ENCODE measurements at regions of chr5 and their contacts with region 1.

Region 1: DNA sequence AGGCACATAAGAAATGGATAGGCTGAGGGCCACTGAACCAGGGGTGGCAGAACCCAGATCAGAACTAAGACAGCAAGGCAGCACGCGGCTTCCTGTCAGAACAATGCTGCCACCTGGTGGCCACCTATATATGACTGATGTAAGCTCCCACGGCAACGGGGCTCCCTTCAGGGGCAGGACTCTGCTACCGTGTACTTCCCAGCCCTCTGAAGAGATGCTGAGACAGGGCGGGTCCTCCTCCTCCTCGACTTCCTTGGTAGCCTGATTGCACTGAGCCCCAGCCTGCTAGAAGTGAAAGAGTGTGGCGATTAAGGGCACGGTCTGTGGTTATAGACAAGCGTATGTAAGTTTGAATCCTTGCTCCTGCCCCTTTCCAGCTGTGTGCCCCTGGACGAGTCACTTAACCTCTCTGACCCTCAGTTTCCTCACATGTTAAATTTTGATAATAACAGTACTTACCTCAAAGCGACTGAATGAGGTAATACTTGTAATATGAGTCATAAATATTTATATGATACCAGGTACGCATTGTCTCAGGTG is 13.3 kb downstream of the RPS14 start:
- DNase-seq: peak; percentile 94
- ATAC-seq: peak; percentile 93
- H3K4me3 ChIP-seq: peak overlapping the region in 1 of 5 experiments; percentile 1
- H3K4me3 Mint-ChIP-seq: peak overlapping the region; percentile 74
- H3K27ac ChIP-seq: peak overlapping the region; percentile 56 to 68
- H3K27ac Mint-ChIP-seq: peak overlapping the region; percentile 95
- H3K4me1 ChIP-seq: peaks cover 46 to 52% of the 10 kb centered on the region in 2 donors
- H3K4me1 Mint-ChIP-seq: peaks cover 42% of the 10 kb centered on the region
- H3K27me3 ChIP-seq: no peaks in the 10 kb centered on the region
- H3K27me3 Mint-ChIP-seq: no peaks in the 10 kb centered on the region
- CTCF ChIP-seq: peak; percentile 84

Region 2: DNA sequence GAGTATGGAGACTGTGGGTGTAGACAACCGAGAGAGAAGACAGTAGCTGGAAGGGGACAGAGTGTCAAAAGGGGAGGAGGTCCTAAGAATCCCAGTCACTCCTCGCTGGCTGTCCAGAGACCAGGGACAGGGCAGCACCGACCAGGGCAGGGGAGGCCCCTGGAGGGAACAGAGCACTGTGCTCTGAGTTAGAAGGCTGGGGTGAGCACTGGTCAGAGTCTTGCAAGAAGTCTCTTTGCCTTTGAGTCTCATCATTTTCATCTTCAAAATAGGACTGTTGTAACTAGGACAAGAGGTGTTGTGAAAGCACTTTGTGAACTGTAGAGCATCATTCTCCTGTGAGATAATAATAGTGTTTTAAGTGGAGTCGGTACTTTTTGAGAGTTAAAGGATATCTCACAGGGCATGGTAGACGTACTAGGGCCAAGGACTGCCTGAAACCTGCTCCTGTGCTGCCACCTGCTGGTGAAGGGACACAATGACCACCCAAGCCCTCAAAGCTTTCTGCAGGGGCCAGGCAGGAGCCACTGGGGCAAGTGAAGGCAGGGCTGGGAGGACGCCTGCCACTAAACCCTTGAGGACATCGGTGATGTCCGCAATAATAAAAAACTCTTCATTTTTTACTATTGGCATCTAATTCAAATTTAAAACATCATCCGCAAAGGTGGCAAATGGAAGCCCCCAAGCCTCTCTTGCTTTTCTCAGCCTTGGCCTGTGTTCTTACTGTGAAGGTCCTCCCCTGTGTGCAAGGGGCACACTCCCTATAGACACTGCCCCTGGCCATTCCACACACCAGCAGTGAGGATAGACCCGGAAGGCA is 218.1 kb before region 1 on chr5:
- CTCF ChIA-PET with region 1: interaction called, 3 read pairs
- POLR2A ChIA-PET with region 1: no interaction called
- intact Hi-C with region 1: loop called (anchors 1 kb)
- DNase-seq: peak; percentile 82
- ATAC-seq: peak; percentile 88
- H3K4me3 ChIP-seq: no peak overlapping the region
- H3K4me3 Mint-ChIP-seq: no peak overlapping the region
- H3K27ac ChIP-seq: no peak overlapping the region
- H3K27ac Mint-ChIP-seq: no peak overlapping the region
- H3K4me1 ChIP-seq: peaks cover 0 to 3% of the 10 kb centered on the region in 2 donors
- H3K4me1 Mint-ChIP-seq: peaks cover 2% of the 10 kb centered on the region
- H3K27me3 ChIP-seq: peaks cover 0 to 4% (median 2%) of the 10 kb centered on the region in 4 experiments
- H3K27me3 Mint-ChIP-seq: peaks cover 15% of the 10 kb centered on the region
- CTCF ChIP-seq: peak; percentile 95

Region 3: DNA sequence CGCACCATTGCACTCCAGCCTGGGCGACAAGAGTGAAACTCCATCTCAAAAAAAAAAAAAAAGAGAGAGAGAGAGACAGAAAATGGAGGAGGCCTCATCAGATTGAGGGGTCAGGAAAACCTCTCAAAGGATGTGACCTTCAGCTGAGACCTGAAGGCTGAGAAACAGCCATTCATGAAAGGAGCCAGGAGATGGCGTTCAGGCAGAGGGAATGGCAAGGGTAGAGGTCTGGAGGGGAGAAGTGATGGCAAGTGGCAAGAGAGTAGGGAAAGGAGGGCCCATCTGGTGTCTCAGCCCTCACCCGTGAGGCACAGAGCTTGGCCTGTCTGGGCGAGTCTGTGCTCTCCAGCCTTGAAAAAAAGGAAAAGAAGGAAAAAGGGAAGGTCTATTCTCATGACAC is 163.7 kb before region 1 on chr5:
- CTCF ChIA-PET with region 1: no interaction called
- POLR2A ChIA-PET with region 1: no interaction called
- intact Hi-C with region 1: loop called (anchors 2 kb)
- DNase-seq: no peak
- ATAC-seq: no peak
- H3K4me3 ChIP-seq: no peak overlapping the region
- H3K4me3 Mint-ChIP-seq: no peak overlapping the region
- H3K27ac ChIP-seq: no peak overlapping the region
- H3K27ac Mint-ChIP-seq: no peak overlapping the region
- H3K4me1 ChIP-seq: no peaks in the 10 kb centered on the region
- H3K4me1 Mint-ChIP-seq: no peaks in the 10 kb centered on the region
- H3K27me3 ChIP-seq: no peaks in the 10 kb centered on the region
- H3K27me3 Mint-ChIP-seq: peaks cover 16% of the 10 kb centered on the region
- CTCF ChIP-seq: no peak

Region 4: DNA sequence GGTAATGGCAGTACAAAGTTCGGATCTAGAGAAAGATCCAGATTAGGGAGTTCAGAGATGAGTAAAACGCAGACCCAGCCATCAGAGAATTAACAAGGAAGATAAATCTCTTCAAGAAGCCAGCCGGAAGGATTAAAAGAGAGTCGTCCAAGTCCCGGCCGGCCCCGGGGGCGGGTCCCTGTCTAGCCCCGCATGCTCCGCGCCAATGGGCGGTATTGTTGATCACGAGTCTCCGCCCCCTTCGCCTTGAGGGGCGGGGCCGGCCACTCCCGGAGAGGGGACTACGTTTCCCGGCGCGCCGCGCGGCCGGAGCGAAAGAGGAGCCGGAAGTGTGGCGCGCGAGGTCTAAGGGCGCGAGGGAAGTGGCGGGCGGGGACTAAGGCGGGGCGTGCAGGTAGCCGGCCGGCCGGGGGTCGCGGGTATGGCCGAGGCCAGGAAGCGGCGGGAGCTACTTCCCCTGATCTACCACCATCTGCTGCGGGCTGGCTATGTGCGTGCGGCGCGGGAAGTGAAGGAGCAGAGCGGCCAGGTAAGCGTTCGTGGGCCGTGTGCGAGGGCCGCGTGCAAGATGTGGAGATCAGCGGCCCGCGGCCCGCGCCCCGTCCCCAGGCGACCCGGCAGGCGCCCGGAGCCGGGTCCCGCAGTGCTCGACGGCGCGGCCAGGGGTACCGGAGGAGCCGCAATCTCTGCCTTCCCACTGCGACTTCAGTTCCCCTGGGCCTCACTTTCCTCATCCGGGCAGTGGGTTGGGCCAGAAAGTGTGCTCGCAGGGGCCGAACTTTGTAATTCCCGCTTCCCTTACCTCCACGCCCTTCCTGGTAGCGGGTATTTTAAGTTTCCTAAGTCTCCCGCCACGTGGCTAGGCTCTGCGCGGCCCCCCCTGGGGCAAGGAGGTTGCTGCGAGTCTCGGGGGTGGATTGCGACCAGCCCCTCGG is 78.6 kb before region 1 on chr5 and contains the start of gene TCOF1:
- CTCF ChIA-PET with region 1: interaction called, 3 read pairs
- POLR2A ChIA-PET with region 1: no interaction called
- intact Hi-C with region 1: loop called (anchors 1 kb)
- DNase-seq: peak; percentile 97
- ATAC-seq: peak; percentile 99
- H3K4me3 ChIP-seq: peak within 1 kb of the TSS; percentile 53 to 77 (median 69)
- H3K4me3 Mint-ChIP-seq: peak within 1 kb of the TSS; percentile 90
- H3K27ac ChIP-seq: peak within 1 kb of the TSS; percentile 23 to 68
- H3K27ac Mint-ChIP-seq: peak within 1 kb of the TSS; percentile 88
- H3K4me1 ChIP-seq: peaks cover 35 to 54% of the 10 kb centered on the region in 2 donors
- H3K4me1 Mint-ChIP-seq: peaks cover 50% of the 10 kb centered on the region
- H3K27me3 ChIP-seq: no peaks in the 10 kb centered on the region
- H3K27me3 Mint-ChIP-seq: no peaks in the 10 kb centered on the region
- CTCF ChIP-seq: no peak
- total RNA-seq, gene TCOF1: 62.4 and 66.5 TPM in 2 replicates

Region 5: GRCh38 chr5:150398722-150399523 is 37.3 kb before region 1 on chr5:
- CTCF ChIA-PET with region 1: interaction called, 396 read pairs
- POLR2A ChIA-PET with region 1: interaction called, 286 read pairs
- intact Hi-C with region 1: loop called (anchors 1 kb)
- DNase-seq: peak; percentile 94
- ATAC-seq: peak; percentile 67
- H3K4me3 ChIP-seq: no peak overlapping the region
- H3K4me3 Mint-ChIP-seq: peak overlapping the region; percentile 27
- H3K27ac ChIP-seq: peak overlapping the region; percentile 54 to 63
- H3K27ac Mint-ChIP-seq: peak overlapping the region; percentile 88
- H3K4me1 ChIP-seq: peaks cover 3 to 33% of the 10 kb centered on the region in 2 donors
- H3K4me1 Mint-ChIP-seq: peaks cover 49% of the 10 kb centered on the region
- H3K27me3 ChIP-seq: no peaks in the 10 kb centered on the region
- H3K27me3 Mint-ChIP-seq: no peaks in the 10 kb centered on the region
- CTCF ChIP-seq: peak; percentile 83

Region 6: GRCh38 chr5:150419630-150420270 is 16.5 kb before region 1 on chr5:
- CTCF ChIA-PET with region 1: interaction called, 19 read pairs
- POLR2A ChIA-PET with region 1: interaction called, 387 read pairs
- intact Hi-C with region 1: no loop called
- DNase-seq: peak; percentile 87
- ATAC-seq: peak; percentile 99
- H3K4me3 ChIP-seq: peak overlapping the region in 4 of 5 experiments; percentile 16 to 46 (median 33)
- H3K4me3 Mint-ChIP-seq: peak overlapping the region; percentile 81
- H3K27ac ChIP-seq: peak overlapping the region; percentile 86 to 88
- H3K27ac Mint-ChIP-seq: peak overlapping the region; percentile 100
- H3K4me1 ChIP-seq: peaks cover 67 to 72% of the 10 kb centered on the region in 2 donors
- H3K4me1 Mint-ChIP-seq: peaks cover 59% of the 10 kb centered on the region
- H3K27me3 ChIP-seq: no peaks in the 10 kb centered on the region
- H3K27me3 Mint-ChIP-seq: no peaks in the 10 kb centered on the region
- CTCF ChIP-seq: no peak

Region 7: DNA sequence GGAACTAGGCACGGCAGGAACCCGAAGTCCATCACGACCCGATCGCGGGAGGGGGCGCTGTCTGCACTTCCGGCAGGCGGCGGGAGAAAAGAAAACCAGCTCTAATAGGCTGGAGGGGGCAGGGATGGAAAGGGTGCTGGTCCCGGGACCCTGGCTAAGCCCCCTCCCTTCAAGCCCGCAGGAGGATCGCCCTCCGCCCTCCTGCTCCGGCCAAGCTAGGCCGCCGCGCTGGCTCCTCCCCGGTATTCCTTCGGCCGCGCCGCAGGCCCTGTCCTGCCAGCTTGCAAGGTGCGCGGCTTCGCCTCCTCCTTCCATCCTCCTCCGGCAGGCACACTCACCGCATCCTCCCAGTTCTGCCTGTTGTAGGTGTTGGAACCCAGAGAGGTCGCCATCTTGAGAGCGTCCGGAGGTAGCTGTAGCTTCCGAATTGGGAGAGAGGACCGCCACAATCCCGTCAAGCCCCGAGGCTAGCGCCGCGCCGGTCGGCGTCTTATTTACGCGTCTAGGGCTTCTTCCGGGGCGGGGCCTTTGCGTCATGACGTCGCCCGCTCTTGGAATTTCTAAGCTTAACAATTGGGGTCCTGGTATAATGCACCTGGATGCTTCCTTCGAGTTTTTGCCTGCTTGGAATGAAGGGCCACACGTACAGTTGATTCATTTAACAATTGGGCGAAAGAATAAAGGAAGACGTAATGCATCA is 264.5 kb after region 1 on chr5 and contains the start of gene RBM22:
- CTCF ChIA-PET with region 1: no interaction called
- POLR2A ChIA-PET with region 1: no interaction called
- intact Hi-C with region 1: no loop called
- DNase-seq: peak; percentile 94
- ATAC-seq: peak; percentile 96
- H3K4me3 ChIP-seq: peak within 1 kb of the TSS; percentile 65 to 100 (median 99)
- H3K4me3 Mint-ChIP-seq: no peak within 1 kb of the TSS
- H3K27ac ChIP-seq: peak within 1 kb of the TSS; percentile 96 to 97
- H3K27ac Mint-ChIP-seq: no peak within 1 kb of the TSS
- H3K4me1 ChIP-seq: peaks cover 15 to 17% of the 10 kb centered on the region in 2 donors
- H3K4me1 Mint-ChIP-seq: peaks cover 8% of the 10 kb centered on the region
- H3K27me3 ChIP-seq: no peaks in the 10 kb centered on the region
- H3K27me3 Mint-ChIP-seq: no peaks in the 10 kb centered on the region
- CTCF ChIP-seq: peak; percentile 84
- total RNA-seq, gene RBM22: 88.4 and 89.4 TPM in 2 replicates

Measured in B cell (primary cell).